ENCODE measurements at regions of chr1 and their contacts with region 1.

Region 1: DNA sequence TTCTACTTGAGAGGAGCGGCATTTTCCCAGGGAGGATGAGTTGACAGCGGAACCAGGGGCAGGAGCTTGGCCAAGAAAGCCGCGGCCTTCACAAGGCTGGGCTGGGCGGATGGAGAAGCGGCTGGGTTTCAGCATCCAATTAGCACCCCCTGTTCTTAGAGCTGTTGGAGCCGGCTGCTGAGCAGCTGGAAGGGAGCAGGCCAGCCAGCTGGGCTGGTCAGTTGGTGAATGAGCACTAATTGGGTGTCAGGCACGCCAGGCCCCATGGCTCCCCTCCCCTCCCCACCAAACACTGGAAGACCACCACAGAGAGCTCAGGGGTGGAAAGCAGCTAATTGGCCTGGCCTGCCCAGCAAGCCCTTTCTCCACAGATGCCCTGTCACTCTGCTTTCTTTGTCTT is 245.6 kb downstream of the RRAGC start:
- DNase-seq: no peak

Region 2: GRCh38 chr1:38589036-38589435 is 25.0 kb before region 1 on chr1:
- intact Hi-C with region 1: no loop called
- DNase-seq: no peak

Region 3: DNA sequence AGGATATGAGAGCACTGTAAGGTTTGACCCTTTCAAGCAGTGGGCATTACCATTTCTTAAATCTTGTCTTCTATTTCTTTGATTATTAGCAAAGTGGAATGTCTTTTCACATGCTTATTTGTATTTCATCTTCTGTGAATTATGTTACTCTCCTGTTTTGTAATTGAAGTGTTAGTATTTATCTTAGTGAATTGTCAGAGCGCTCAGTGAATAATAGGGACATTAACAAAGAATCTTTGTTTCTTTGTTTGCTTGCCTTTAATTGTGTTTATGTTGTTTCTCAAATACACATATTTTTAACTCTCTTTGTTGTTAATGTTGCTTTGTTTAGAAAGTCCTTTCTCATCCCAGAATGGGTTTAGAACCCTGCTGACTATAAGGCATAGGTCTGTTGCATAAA is 13.7 kb before region 1 on chr1:
- intact Hi-C with region 1: loop called in 1 of 2 experiments (anchors 1 kb)
- DNase-seq: no peak

Measured in posterior vena cava (tissue), 2 donors.